KBM-7 (cell line): ENCODE measurements at regions of chrX and their contacts with region 1.

Region 1: DNA sequence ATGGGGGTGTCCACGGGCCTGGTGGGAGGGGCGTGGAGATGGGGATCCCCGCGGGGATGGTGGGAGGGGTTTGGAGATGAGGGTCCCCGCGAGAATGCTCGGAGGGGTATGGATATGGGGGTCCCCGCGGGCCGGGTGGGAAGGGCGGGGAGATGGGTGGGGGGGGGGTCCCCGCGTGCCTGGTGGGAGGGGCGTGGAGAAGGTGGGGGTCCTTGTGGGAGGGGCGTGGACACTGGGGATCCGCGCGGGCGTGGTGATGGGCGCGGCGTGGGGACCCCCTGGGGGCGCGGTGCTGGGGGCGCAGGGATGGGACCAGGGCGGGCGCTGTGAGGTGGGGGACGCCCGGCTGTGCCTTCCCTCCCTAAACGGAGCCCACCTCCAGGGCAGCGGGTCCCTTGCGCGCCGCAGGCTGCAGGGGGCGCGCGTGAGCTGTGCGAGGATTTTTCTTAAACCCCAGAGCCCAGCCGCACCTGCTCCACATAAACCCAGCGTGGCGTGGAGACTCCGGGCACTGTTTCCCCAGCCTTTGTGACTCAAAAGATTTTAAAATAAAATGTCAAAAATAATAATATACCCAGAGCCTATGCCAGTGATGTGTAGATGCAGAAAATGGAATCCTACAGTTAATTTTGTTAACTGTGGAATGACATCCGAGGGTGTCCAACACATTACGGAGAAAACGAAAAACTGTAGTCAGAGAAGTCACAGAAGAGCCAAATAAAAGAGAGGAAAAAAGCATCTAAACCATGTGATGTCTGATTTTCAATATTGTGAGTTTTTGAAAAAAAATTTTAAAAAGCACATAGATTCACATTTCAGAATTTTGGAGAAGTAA is 1.5 kb upstream of the ASMTL start:
- DNase-seq: peak; percentile 99

Region 2: DNA sequence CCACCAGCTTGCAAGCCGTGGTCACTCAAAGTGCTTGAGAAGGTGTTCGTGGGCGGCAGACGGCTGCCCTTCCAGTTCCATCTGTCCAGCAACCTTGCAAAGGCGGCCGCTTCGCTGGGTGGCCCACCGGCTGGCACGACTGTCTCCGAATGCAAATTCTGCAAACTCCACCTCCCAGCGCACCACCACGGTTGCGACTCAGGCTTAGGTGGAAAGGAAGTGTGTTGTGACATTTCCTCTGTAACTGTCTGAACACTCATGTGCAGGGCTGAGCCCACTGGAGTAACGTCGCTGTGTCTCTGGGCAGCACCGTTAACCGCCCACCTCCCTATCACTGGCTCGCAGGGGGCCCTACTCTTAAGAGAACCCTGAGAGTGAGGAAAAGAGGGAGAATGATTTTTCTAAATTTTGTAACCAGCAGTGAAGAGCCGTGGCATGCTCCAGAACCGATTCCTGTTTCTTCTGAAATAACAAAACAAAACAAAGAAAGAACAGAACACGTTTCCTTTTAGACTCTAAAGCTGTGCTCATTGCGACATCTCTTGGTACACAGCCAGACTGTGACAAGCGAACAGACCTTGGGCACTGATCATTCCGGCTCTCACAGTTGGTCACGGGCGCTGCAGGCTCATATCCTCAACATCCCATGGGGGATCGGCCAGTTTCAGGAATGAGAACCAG is 83.0 kb after region 1 on chrX and contains the start of gene P2RY8:
- in situ Hi-C with region 1: no loop called
- DNase-seq: peak; percentile 98

Region 3: GRCh38 chrX:1784773-1785172 is 330.6 kb after region 1 on chrX:
- in situ Hi-C with region 1: no loop called
- DNase-seq: no peak

Region 4: DNA sequence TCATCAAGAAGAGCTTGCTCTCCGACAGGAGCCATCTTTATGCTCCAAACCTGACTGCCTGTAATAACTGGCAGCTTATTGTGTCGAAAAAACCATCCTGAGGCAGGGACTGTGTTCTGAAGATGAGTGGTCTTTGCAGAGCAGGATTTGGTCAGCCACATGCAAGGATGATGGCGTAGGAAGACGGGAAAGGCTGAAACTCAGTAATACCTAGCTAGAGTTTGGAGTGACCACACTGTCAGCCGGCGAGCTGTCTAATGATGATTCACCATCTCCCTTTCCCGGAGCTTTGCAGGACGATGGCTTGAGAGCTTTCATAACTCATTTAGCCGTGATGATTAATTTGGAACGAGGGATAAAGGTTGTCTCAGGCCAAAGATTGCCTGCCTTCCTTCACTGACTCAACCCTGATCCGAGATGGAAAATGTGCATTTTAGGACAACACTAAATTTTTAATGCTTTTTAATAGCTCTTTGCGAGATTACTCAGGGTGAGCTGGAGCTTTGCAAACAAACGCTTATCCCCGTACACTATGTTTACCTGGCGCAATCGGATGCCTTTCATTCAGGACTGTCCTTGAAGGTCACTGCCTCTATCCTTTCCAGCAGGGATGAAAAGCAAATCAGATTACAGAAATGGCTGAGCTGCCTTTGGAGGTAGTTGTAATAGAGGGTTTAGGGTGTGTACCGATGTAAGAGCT is 449.2 kb after region 1 on chrX:
- in situ Hi-C with region 1: no loop called
- DNase-seq: no peak

Region 5: GRCh38 chrX:2608638-2609430 is 1154.7 kb after region 1 on chrX:
- in situ Hi-C with region 1: loop called (anchors 25 kb)
- DNase-seq: peak; percentile 93